PC-9 (cell line): ENCODE measurements at regions of chr6 and their contacts with region 1.

Region 1: GRCh38 chr6:28586962-28587745 is 61.5 kb downstream of the GPX5 start:
- DNase-seq: peak; percentile 58 to 75
- H3K4me3 ChIP-seq: peak overlapping the region; percentile 98
- H3K27ac ChIP-seq: peak overlapping the region; percentile 50; the same call in 1 of the 2 replicates
- H3K4me1 ChIP-seq: peaks cover 32% of the 10 kb centered on the region
- H3K27me3 ChIP-seq: no peaks in the 10 kb centered on the region
- CTCF ChIP-seq: no peak

Region 2: GRCh38 chr6:27772261-27773001 is 814.7 kb before region 1 on chr6:
- CTCF ChIA-PET with region 1: no interaction called
- POLR2A ChIA-PET with region 1: no interaction called
- intact Hi-C with region 1: no loop called
- DNase-seq: peak in 1 of 2 experiments; percentile 84
- H3K4me3 ChIP-seq: no peak overlapping the region
- H3K27ac ChIP-seq: no peak overlapping the region
- H3K4me1 ChIP-seq: no peaks in the 10 kb centered on the region
- H3K27me3 ChIP-seq: no peaks in the 10 kb centered on the region
- CTCF ChIP-seq: peak; percentile 80

Region 3: GRCh38 chr6:28218271-28219248 is 368.6 kb before region 1 on chr6:
- CTCF ChIA-PET with region 1: no interaction called
- POLR2A ChIA-PET with region 1: no interaction called
- intact Hi-C with region 1: loop called (anchors 10 kb)
- DNase-seq: peak in 1 of 2 experiments; percentile 70
- H3K4me3 ChIP-seq: peak overlapping the region; percentile 79
- H3K27ac ChIP-seq: no peak overlapping the region
- H3K4me1 ChIP-seq: peaks cover 11% of the 10 kb centered on the region
- H3K27me3 ChIP-seq: no peaks in the 10 kb centered on the region
- CTCF ChIP-seq: no peak

Region 4: GRCh38 chr6:28281288-28282064 is 305.7 kb before region 1 on chr6 and contains the start of gene PGBD1:
- CTCF ChIA-PET with region 1: no interaction called
- POLR2A ChIA-PET with region 1: no interaction called
- intact Hi-C with region 1: no loop called
- DNase-seq: peak; percentile 45 to 78
- H3K4me3 ChIP-seq: peak within 1 kb of the TSS; percentile 82
- H3K27ac ChIP-seq: no peak within 1 kb of the TSS
- H3K4me1 ChIP-seq: peaks cover 11% of the 10 kb centered on the region; the same call in 1 of the 2 replicates
- H3K27me3 ChIP-seq: no peaks in the 10 kb centered on the region
- CTCF ChIP-seq: no peak
- total RNA-seq, gene PGBD1: 3.6 and 3.9 TPM in 2 replicates

Region 5: GRCh38 chr6:28399350-28400121 is 187.6 kb before region 1 on chr6 and contains the start of gene ZSCAN12:
- CTCF ChIA-PET with region 1: no interaction called
- POLR2A ChIA-PET with region 1: no interaction called
- intact Hi-C with region 1: loop called (anchors 2 kb)
- DNase-seq: peak; percentile 75 to 84
- H3K4me3 ChIP-seq: peak within 1 kb of the TSS; percentile 74
- H3K27ac ChIP-seq: peak within 1 kb of the TSS; percentile 43
- H3K4me1 ChIP-seq: peaks cover 30% of the 10 kb centered on the region
- H3K27me3 ChIP-seq: no peaks in the 10 kb centered on the region
- CTCF ChIP-seq: peak; percentile 43
- total RNA-seq, gene ZSCAN12: 10.9 and 11.2 TPM in 2 replicates

Region 6: GRCh38 chr6:28657769-28658465 is 70.8 kb after region 1 on chr6:
- CTCF ChIA-PET with region 1: no interaction called
- POLR2A ChIA-PET with region 1: interaction called, 3 read pairs
- intact Hi-C with region 1: loop called (anchors 5 kb)
- DNase-seq: peak; percentile 49 to 60
- H3K4me3 ChIP-seq: peak overlapping the region; percentile 88
- H3K27ac ChIP-seq: no peak overlapping the region
- H3K4me1 ChIP-seq: peaks cover 17% of the 10 kb centered on the region
- H3K27me3 ChIP-seq: no peaks in the 10 kb centered on the region
- CTCF ChIP-seq: no peak

Region 7: GRCh38 chr6:28673800-28674671 is 86.9 kb after region 1 on chr6:
- CTCF ChIA-PET with region 1: no interaction called
- POLR2A ChIA-PET with region 1: no interaction called
- intact Hi-C with region 1: loop called (anchors 5 kb)
- DNase-seq: peak; percentile 70 to 73
- H3K4me3 ChIP-seq: peak overlapping the region; percentile 79
- H3K27ac ChIP-seq: no peak overlapping the region
- H3K4me1 ChIP-seq: no peaks in the 10 kb centered on the region
- H3K27me3 ChIP-seq: no peaks in the 10 kb centered on the region
- CTCF ChIP-seq: no peak